ENCODE measurements at regions of chr14 and their contacts with region 1.

Region 1: GRCh38 chr14:75597149-75597548 is 18.7 kb downstream of the FLVCR2 start:
- DNase-seq: no peak
- ATAC-seq: no peak
- H3K4me3 ChIP-seq: no peak overlapping the region
- H3K27ac ChIP-seq: no peak overlapping the region
- H3K4me1 ChIP-seq: no peaks in the 10 kb centered on the region
- H3K27me3 ChIP-seq: peaks cover 2 to 6% of the 10 kb centered on the region in 2 experiments; a peak in 3 of 5 replicates
- CTCF ChIP-seq: no peak
- EP300 ChIP-seq: no peak
- POLR2A ChIP-seq: no peak
- RAD21 ChIP-seq: no peak

Region 2: GRCh38 chr14:75176142-75176820 is 420.9 kb before region 1 on chr14 and contains the start of gene TMED10:
- CTCF ChIA-PET with region 1: no interaction called
- POLR2A ChIA-PET with region 1: no interaction called
- in situ Hi-C with region 1: no loop called
- intact Hi-C with region 1: no loop called
- DNase-seq: peak; percentile 75 to 87 (median 80)
- ATAC-seq: peak; percentile 84
- H3K4me3 ChIP-seq: peak within 1 kb of the TSS; percentile 71
- H3K27ac ChIP-seq: peak within 1 kb of the TSS; percentile 96
- H3K4me1 ChIP-seq: peaks cover 4 to 8% of the 10 kb centered on the region in 2 experiments; a peak in 4 of 5 replicates
- H3K27me3 ChIP-seq: no peaks in the 10 kb centered on the region
- CTCF ChIP-seq: no peak; a peak in 1 of 6 replicates
- EP300 ChIP-seq: no peak
- POLR2A ChIP-seq: peak; percentile 85
- RAD21 ChIP-seq: 0 out of 4 replicates have a peak, but pooled peaks of 1 of the 2 experiments have one; percentile 9
- polyA plus RNA-seq, gene TMED10: 206 to 233 TPM

Region 3: DNA sequence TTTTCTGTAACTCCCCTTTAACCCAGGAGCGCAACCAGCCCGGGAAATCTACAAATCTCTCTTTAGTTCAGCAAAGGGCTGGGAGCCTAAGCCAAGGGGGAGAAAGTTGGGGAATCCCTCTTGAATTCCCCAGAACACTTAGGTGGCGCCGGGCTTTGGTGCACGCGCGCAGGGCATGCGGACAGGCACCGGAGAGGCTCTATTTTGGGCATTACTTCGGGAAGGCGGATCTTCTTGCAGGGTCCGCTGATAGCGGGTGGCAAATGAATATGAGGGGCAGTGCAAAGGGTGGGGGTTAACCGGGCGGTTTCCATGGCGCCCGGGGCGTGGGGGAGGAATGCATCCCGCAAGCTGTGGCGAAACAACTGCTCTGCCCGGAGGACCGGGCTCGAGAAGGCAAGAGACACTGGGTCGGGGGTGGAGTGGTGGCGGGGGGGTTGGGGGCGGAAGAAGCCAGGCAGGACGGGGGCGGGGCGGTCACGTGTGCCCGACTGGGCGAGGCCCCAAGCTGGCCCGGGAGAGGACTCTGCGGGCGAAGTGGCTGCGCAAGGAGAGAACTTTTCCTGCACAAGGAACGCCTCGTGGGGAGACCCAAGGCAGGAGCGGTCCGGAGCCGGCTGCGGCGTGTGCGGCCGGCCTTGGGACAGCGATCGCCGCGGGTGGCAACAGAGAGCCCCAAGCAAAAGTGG is 18.9 kb before region 1 on chr14 and contains the start of gene FLVCR2:
- CTCF ChIA-PET with region 1: no interaction called
- POLR2A ChIA-PET with region 1: no interaction called
- in situ Hi-C with region 1: no loop called
- intact Hi-C with region 1: no loop called
- DNase-seq: peak; percentile 30 to 70 (median 57)
- ATAC-seq: peak; percentile 71
- H3K4me3 ChIP-seq: 0 out of 2 replicates have a peak within 1 kb of the TSS, but pooled peaks have one; percentile 8
- H3K27ac ChIP-seq: no peak within 1 kb of the TSS
- H3K4me1 ChIP-seq: peaks cover 0 to 14% of the 10 kb centered on the region in 2 experiments; a peak in 2 of 5 replicates
- H3K27me3 ChIP-seq: peaks cover 4 to 26% of the 10 kb centered on the region in 2 experiments; a peak in 4 of 5 replicates
- CTCF ChIP-seq: no peak
- EP300 ChIP-seq: no peak
- POLR2A ChIP-seq: no peak
- RAD21 ChIP-seq: no peak
- polyA plus RNA-seq, gene FLVCR2: not detected

Region 4: GRCh38 chr14:75607842-75608241 is 10.7 kb after region 1 on chr14:
- CTCF ChIA-PET with region 1: no interaction called
- POLR2A ChIA-PET with region 1: no interaction called
- in situ Hi-C with region 1: no loop called
- intact Hi-C with region 1: loop called (anchors 1 kb)
- DNase-seq: no peak
- ATAC-seq: no peak
- H3K4me3 ChIP-seq: no peak overlapping the region
- H3K27ac ChIP-seq: no peak overlapping the region
- H3K4me1 ChIP-seq: no peaks in the 10 kb centered on the region; a peak in 2 of 5 replicates
- H3K27me3 ChIP-seq: peaks cover 13 to 51% of the 10 kb centered on the region in 2 experiments; a peak in 4 of 5 replicates
- CTCF ChIP-seq: no peak
- EP300 ChIP-seq: no peak
- POLR2A ChIP-seq: no peak
- RAD21 ChIP-seq: no peak

Measured in K562 (cell line).